ENCODE measurements at regions of chr16 and their contacts with region 1.

Region 1: DNA sequence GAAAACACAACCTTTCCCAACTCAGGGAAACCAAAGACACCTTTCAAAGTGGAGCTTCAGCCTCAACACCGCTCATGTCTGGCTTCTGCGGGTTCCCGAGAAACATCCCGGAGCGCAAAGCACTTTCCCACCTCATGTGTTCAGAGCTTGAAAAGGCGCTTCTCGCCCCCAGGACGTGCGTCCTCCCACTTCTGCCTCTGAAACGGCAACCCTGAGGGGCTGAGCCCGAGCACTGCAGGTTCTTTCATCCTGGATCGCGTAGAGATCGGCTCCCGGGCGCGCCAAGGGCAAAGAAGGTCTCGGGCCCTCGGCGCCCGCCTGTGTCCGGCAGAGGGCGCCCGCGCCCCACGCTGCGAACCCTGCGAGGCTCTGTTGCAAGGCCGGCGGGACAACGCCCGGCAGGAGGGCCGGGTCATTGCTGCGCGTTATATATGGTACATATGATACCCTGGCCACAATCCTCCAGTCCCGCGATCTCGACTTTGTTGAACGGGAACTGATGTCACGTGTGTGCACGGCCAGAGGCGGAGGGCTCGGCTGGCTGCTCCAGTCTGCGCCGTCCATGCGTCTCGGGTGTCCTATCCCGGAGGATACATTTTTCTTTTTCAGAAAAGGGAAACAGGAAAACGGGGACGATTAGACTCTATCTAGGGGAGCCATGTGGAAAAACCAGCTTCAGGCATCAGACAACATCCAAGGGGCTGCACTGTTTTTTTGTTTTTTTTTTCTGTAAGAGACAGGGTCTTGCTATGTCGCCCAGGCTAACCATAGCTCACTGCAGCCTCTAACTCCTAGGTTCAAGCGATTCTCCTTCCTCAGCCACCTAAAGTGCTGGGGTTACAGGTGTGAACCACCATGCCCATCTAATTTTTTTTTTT is 19.1 kb downstream of the COQ7 start:
- DNase-seq: peak; percentile 95
- H3K4me3 ChIP-seq: peak overlapping the region; percentile 34 to 69 (median 41)
- H3K27ac ChIP-seq: peak overlapping the region; percentile 61
- H3K4me1 ChIP-seq: peaks cover 15% of the 10 kb centered on the region
- H3K27me3 ChIP-seq: no peaks in the 10 kb centered on the region
- CTCF ChIP-seq: peak; percentile 99
- POLR2A ChIP-seq: peak; percentile 94

Region 2: GRCh38 chr16:19118938-19119431 is 32.4 kb after region 1 on chr16:
- CTCF ChIA-PET with region 1: interaction called, 12 read pairs
- POLR2A ChIA-PET with region 1: interaction called, 15 read pairs
- dilution Hi-C with region 1: no loop called
- intact Hi-C with region 1: loop called (anchors 1 kb)
- DNase-seq: peak; percentile 88
- H3K4me3 ChIP-seq: peak overlapping the region; percentile 6 to 49 (median 7)
- H3K27ac ChIP-seq: peak overlapping the region; percentile 85
- H3K4me1 ChIP-seq: peaks cover 49% of the 10 kb centered on the region
- H3K27me3 ChIP-seq: no peaks in the 10 kb centered on the region
- CTCF ChIP-seq: no peak
- POLR2A ChIP-seq: no peak

Region 3: GRCh38 chr16:19130852-19131810 is 44.6 kb after region 1 on chr16:
- CTCF ChIA-PET with region 1: interaction called, 8 read pairs
- POLR2A ChIA-PET with region 1: no interaction called
- dilution Hi-C with region 1: no loop called
- intact Hi-C with region 1: loop called (anchors 2 kb)
- DNase-seq: peak; percentile 61
- H3K4me3 ChIP-seq: peak overlapping the region in 2 of 3 experiments; percentile 10 to 43
- H3K27ac ChIP-seq: peak overlapping the region; percentile 99
- H3K4me1 ChIP-seq: peaks cover 22% of the 10 kb centered on the region
- H3K27me3 ChIP-seq: no peaks in the 10 kb centered on the region
- CTCF ChIP-seq: no peak
- POLR2A ChIP-seq: no peak

Region 4: DNA sequence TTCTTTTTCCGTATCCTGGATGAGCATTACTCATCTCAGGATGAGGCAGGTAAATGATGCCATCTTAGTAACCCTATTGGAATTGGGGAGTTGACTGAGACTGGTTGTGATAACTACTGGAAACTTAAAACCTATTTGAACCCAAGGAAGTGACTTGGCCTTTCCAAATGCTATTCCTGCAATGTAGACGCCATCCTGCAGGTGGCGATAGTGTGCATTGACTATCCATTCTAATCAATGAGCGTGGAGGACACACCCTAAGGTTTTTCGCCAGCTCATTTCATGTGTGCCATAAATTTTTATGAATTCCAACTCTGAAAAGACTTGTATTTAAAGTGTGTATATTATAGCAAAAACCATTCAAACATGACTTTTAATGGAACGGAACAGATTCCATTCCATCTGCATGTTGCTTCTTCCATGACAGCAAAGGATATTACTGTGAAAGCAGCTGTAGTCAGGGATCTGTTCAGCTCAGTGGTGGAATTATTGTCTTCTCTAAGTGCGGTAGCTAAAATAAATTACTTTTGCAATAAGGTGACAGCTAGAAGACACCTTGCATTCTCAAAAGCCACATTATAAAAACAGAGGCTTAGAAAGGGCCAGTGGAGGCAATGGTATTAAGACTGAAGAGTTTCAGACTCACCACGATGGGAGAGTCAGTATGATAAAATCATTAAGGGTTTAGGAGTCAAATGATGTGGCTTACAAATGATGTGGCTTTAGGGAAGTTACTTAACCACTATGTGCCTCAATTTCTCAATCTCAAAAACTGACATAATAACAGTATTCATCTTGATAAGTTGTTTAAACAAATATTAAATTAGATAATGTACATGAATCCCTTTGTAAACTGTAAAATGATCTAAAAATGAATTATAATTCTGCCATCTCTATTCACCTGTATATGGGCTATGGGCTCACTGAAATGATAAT is 136.9 kb after region 1 on chr16:
- CTCF ChIA-PET with region 1: interaction called, 7 read pairs
- POLR2A ChIA-PET with region 1: no interaction called
- dilution Hi-C with region 1: no loop called
- intact Hi-C with region 1: loop called (anchors 1 kb)
- DNase-seq: peak; percentile 8
- H3K4me3 ChIP-seq: no peak overlapping the region
- H3K27ac ChIP-seq: no peak overlapping the region
- H3K4me1 ChIP-seq: no peaks in the 10 kb centered on the region
- H3K27me3 ChIP-seq: no peaks in the 10 kb centered on the region
- CTCF ChIP-seq: peak; percentile 52 to 56
- POLR2A ChIP-seq: no peak

Region 5: DNA sequence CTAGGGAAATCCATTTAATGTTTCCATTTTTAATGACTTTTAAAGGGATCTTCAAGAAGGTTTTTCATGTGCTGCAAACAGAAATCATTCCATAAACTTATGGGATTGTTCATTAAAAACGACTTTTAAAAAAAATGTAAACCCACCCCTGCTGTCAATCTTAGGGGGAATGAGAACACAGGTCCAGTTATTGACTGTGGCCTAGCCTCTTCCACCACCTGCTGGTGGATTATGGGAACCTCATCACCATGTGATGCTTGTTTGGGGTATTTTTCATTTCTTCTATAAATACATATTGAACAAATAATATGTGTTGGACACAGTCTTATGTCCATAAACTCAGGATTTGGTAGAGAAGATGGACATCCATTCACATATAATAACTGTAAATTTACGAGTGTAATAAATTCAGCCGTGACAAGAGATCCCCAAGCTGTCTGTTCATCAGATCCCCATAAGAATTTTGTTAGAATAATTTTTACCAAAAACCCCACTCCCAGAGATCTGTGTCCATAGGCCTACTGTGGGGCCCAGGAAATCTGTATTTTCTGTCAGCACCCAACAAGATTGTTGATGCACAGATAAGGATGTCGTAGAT is 289.1 kb after region 1 on chr16:
- CTCF ChIA-PET with region 1: interaction called, 28 read pairs
- POLR2A ChIA-PET with region 1: no interaction called
- dilution Hi-C with region 1: no loop called
- intact Hi-C with region 1: loop called (anchors 1 kb)
- DNase-seq: peak; percentile 71
- H3K4me3 ChIP-seq: no peak overlapping the region
- H3K27ac ChIP-seq: no peak overlapping the region
- H3K4me1 ChIP-seq: no peaks in the 10 kb centered on the region
- H3K27me3 ChIP-seq: peaks cover 0 to 3% of the 10 kb centered on the region in 2 experiments
- CTCF ChIP-seq: peak; percentile 59 to 67
- POLR2A ChIP-seq: no peak

Measured in endothelial cell of umbilical vein (primary cell).